Activated naive CD4-positive, alpha-beta T cell treated with anti-CD3 and anti-CD28 coated beads for 36 hours (primary cell): ENCODE measurements at regions of chr6 and their contacts with region 1.

Region 1: GRCh38 chr6:6676910-6677441 is 88.5 kb downstream of the LY86 start:
- DNase-seq: peak; percentile 92
- H3K4me3 Mint-ChIP-seq: no peak overlapping the region
- H3K27ac Mint-ChIP-seq: no peak overlapping the region
- H3K4me1 Mint-ChIP-seq: peaks cover 6% of the 10 kb centered on the region
- H3K27me3 Mint-ChIP-seq: no peaks in the 10 kb centered on the region

Region 2: GRCh38 chr6:6661684-6662083 is 15.3 kb before region 1 on chr6:
- CTCF ChIA-PET with region 1: interaction called, 12 read pairs
- intact Hi-C with region 1: no loop called
- DNase-seq: no peak
- H3K4me3 Mint-ChIP-seq: no peak overlapping the region
- H3K27ac Mint-ChIP-seq: no peak overlapping the region
- H3K4me1 Mint-ChIP-seq: peaks cover 42% of the 10 kb centered on the region
- H3K27me3 Mint-ChIP-seq: no peaks in the 10 kb centered on the region

Region 3: DNA sequence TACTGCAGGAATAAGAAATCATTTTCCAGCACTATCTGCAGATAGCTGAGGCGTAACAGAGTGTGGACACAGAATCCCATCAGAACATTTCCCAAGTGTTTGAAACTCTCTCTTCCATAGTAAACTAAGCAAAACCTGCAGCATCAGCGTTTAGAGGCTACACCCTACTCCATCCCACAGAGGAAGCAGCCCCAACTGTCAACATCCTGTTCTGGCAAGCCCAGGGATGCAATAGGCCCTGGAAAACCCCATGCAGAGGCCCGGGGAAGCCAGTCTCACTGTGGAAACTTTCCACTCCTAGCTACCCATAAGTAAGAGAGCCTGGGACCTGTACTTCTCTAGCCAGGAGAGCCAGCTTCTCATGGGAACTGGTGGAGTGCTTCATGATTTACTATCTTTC is 41.0 kb after region 1 on chr6:
- CTCF ChIA-PET with region 1: interaction called, 23 read pairs
- intact Hi-C with region 1: no loop called
- DNase-seq: peak; percentile 73
- H3K4me3 Mint-ChIP-seq: no peak overlapping the region
- H3K27ac Mint-ChIP-seq: no peak overlapping the region
- H3K4me1 Mint-ChIP-seq: peaks cover 13% of the 10 kb centered on the region
- H3K27me3 Mint-ChIP-seq: no peaks in the 10 kb centered on the region

Region 4: GRCh38 chr6:6803572-6803971 is 126.6 kb after region 1 on chr6:
- CTCF ChIA-PET with region 1: interaction called, 3 read pairs
- intact Hi-C with region 1: loop called (anchors 5 kb)
- DNase-seq: peak; percentile 68
- H3K4me3 Mint-ChIP-seq: no peak overlapping the region
- H3K27ac Mint-ChIP-seq: peak overlapping the region; percentile 18
- H3K4me1 Mint-ChIP-seq: peaks cover 26% of the 10 kb centered on the region
- H3K27me3 Mint-ChIP-seq: peaks cover 2% of the 10 kb centered on the region

Region 5: GRCh38 chr6:6905961-6906518 is 229.1 kb after region 1 on chr6:
- CTCF ChIA-PET with region 1: no interaction called
- intact Hi-C with region 1: no loop called
- DNase-seq: no peak
- H3K4me3 Mint-ChIP-seq: no peak overlapping the region
- H3K27ac Mint-ChIP-seq: no peak overlapping the region
- H3K4me1 Mint-ChIP-seq: no peaks in the 10 kb centered on the region
- H3K27me3 Mint-ChIP-seq: peaks cover 19% of the 10 kb centered on the region

Region 6: GRCh38 chr6:7615611-7616383 is 938.8 kb after region 1 on chr6:
- CTCF ChIA-PET with region 1: no interaction called
- intact Hi-C with region 1: loop called (anchors 2 kb)
- DNase-seq: peak; percentile 58
- H3K4me3 Mint-ChIP-seq: no peak overlapping the region
- H3K27ac Mint-ChIP-seq: no peak overlapping the region
- H3K4me1 Mint-ChIP-seq: peaks cover 14% of the 10 kb centered on the region
- H3K27me3 Mint-ChIP-seq: no peaks in the 10 kb centered on the region